AG04450 (cell line): ENCODE measurements at regions of chr10 and their contacts with region 1.

Region 1: GRCh38 chr10:58952747-58953466 is 223.5 kb upstream of the PHYHIPL start:
- DNase-seq: no peak
- H3K4me3 ChIP-seq: no peak overlapping the region
- H3K27ac ChIP-seq: no peak overlapping the region
- H3K27me3 ChIP-seq: peaks cover 3% of the 10 kb centered on the region
- CTCF ChIP-seq: peak; percentile 81

Region 2: GRCh38 chr10:58930500-58930899 is 22.4 kb before region 1 on chr10:
- CTCF ChIA-PET with region 1: interaction called, 10 read pairs
- POLR2A ChIA-PET with region 1: no interaction called
- DNase-seq: no peak
- H3K4me3 ChIP-seq: no peak overlapping the region
- H3K27ac ChIP-seq: no peak overlapping the region
- H3K27me3 ChIP-seq: no peaks in the 10 kb centered on the region
- CTCF ChIP-seq: no peak

Region 3: GRCh38 chr10:58963101-58963534 is 10.2 kb after region 1 on chr10:
- CTCF ChIA-PET with region 1: interaction called, 10 read pairs
- POLR2A ChIA-PET with region 1: no interaction called
- DNase-seq: no peak
- H3K4me3 ChIP-seq: no peak overlapping the region
- H3K27ac ChIP-seq: no peak overlapping the region
- H3K27me3 ChIP-seq: peaks cover 5% of the 10 kb centered on the region
- CTCF ChIP-seq: peak; percentile 17; the same call in 1 of the 2 replicates